H1 (cell line): ENCODE measurements at regions of chr9 and their contacts with region 1.

Region 1: DNA sequence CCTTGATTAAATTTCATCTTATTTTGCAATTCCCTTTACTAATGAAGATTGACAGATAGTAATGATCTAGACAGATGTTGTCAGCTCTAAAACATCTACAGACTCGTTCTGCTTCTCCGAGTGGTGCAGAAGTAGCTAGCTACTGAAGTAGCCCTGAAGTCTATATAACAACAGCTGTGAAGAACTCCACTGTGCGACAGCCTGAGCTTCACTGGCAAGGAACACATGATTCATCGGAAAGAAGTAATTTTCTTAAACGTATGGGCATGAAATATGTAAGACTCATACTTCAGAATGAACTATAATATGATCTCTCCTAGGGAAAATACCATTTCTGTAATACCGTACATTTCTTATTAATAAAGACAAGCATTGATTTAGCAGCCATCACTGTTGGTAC is 96.2 kb downstream of the TRPM3 start:
- DNase-seq: no peak
- H3K4me3 ChIP-seq: no peak overlapping the region
- H3K27ac ChIP-seq: no peak overlapping the region
- H3K4me1 ChIP-seq: peaks cover 0 to 3% (median 0%) of the 10 kb centered on the region in 4 experiments; a peak in 1 of 7 replicates
- H3K27me3 ChIP-seq: no peaks in the 10 kb centered on the region
- CTCF ChIP-seq: no peak
- EP300 ChIP-seq: no peak
- POLR2A ChIP-seq: no peak
- RAD21 ChIP-seq: no peak

Region 2: GRCh38 chr9:71001780-71002386 is 23.3 kb before region 1 on chr9:
- CTCF ChIA-PET with region 1: no interaction called
- POLR2A ChIA-PET with region 1: no interaction called
- DNase-seq: peak in 1 of 2 experiments; percentile 9
- H3K4me3 ChIP-seq: no peak overlapping the region
- H3K27ac ChIP-seq: no peak overlapping the region
- H3K4me1 ChIP-seq: no peaks in the 10 kb centered on the region; a peak in 2 of 7 replicates
- H3K27me3 ChIP-seq: no peaks in the 10 kb centered on the region; a peak in 1 of 7 replicates
- CTCF ChIP-seq: peak; percentile 37 to 84 (median 80)
- EP300 ChIP-seq: no peak
- POLR2A ChIP-seq: no peak
- RAD21 ChIP-seq: peak; percentile 85 to 87

Region 3: GRCh38 chr9:71036501-71036900 is 11.3 kb after region 1 on chr9:
- CTCF ChIA-PET with region 1: interaction called, 10 read pairs
- POLR2A ChIA-PET with region 1: no interaction called
- DNase-seq: no peak
- H3K4me3 ChIP-seq: no peak overlapping the region
- H3K27ac ChIP-seq: no peak overlapping the region
- H3K4me1 ChIP-seq: no peaks in the 10 kb centered on the region; a peak in 1 of 7 replicates
- H3K27me3 ChIP-seq: no peaks in the 10 kb centered on the region
- CTCF ChIP-seq: no peak
- EP300 ChIP-seq: no peak
- POLR2A ChIP-seq: no peak
- RAD21 ChIP-seq: no peak